SK-N-SH (cell line): ENCODE measurements at regions of chr14 and their contacts with region 1.

Region 1: DNA sequence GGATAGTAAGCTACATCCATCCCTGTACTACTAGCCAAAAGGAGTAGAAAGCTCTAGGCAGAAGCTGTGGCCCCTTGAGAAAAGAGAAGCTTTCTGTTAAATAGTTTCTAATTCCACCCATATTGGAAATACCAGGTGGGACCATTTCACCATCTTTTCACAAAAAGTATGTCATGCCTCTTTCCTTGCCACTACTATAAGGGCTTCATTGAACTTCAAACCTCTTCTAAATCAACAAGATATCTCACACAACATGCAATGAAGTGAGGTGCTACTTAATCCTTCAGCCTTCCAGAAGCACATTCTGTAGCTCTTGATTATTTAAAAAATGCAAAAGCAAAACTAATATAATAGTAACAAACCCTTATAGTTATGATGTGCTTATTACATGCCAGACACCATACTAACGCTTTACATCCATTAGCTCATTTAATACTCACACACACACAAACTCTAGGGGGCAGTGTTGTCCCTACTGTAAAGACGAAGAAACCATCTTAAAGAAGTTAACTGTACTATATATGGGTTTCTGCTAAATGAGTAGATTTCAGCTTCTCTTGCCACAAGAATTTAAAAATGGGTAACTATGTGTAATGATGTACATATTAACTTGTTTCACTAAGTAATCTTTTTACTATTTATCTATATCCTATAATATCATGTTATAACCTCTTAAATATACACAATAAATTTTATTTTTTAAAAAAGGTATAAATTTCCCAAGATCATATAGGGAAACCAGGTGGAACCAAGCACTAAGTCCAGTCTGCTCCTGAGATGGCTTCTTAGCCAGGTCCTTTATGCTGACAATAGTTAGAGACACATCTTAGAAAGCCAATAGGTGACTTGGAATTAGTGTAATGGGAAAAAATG is 124.4 kb downstream of the RPS29 start:
- DNase-seq: peak; percentile 33
- H3K4me3 ChIP-seq: no peak overlapping the region; a peak in 1 of 4 replicates
- H3K27ac ChIP-seq: no peak overlapping the region
- H3K4me1 ChIP-seq: no peaks in the 10 kb centered on the region
- H3K27me3 ChIP-seq: no peaks in the 10 kb centered on the region
- CTCF ChIP-seq: peak; percentile 85
- EP300 ChIP-seq: no peak
- RAD21 ChIP-seq: peak; percentile 82

Region 2: DNA sequence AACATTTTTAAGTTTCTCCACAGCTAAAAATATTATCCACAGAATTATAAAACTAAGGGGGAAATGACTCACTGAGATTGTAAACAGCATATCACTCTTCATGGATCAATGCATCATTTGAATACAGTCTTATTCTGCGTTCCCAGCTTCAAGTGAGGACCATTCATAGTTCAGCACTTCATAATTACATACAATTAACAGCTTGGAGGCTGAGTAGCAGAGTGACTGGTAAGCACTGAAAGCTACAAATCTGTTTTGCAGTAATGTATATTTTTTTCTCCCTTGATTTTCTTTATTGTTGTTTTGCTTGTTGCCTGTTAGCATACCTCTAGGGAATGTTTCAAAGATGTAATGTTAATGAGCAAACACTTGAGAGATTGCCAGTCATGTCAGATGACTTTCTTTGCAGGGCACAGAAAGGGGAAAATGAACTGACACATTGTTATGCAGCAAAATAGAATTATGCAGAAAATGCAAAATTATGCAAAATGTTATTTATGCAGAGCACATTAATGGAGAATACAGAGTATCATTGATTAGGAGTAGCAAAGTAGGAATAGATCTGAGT is 14.1 kb before region 1 on chr14:
- CTCF ChIA-PET with region 1: interaction called, 80 read pairs
- POLR2A ChIA-PET with region 1: no interaction called
- DNase-seq: no peak
- H3K4me3 ChIP-seq: no peak overlapping the region
- H3K27ac ChIP-seq: no peak overlapping the region
- H3K4me1 ChIP-seq: peaks cover 0 to 4% of the 10 kb centered on the region in 2 experiments; a peak in 1 of 4 replicates
- H3K27me3 ChIP-seq: no peaks in the 10 kb centered on the region
- CTCF ChIP-seq: no peak
- EP300 ChIP-seq: no peak
- RAD21 ChIP-seq: no peak

Region 3: GRCh38 chr14:49505041-49505766 is 43.4 kb after region 1 on chr14:
- CTCF ChIA-PET with region 1: interaction called, 26 read pairs
- POLR2A ChIA-PET with region 1: no interaction called
- DNase-seq: no peak
- H3K4me3 ChIP-seq: no peak overlapping the region
- H3K27ac ChIP-seq: no peak overlapping the region
- H3K4me1 ChIP-seq: no peaks in the 10 kb centered on the region
- H3K27me3 ChIP-seq: peaks cover 7% of the 10 kb centered on the region; the same call in 1 of the 2 replicates
- CTCF ChIP-seq: no peak
- EP300 ChIP-seq: no peak
- RAD21 ChIP-seq: no peak

Region 4: DNA sequence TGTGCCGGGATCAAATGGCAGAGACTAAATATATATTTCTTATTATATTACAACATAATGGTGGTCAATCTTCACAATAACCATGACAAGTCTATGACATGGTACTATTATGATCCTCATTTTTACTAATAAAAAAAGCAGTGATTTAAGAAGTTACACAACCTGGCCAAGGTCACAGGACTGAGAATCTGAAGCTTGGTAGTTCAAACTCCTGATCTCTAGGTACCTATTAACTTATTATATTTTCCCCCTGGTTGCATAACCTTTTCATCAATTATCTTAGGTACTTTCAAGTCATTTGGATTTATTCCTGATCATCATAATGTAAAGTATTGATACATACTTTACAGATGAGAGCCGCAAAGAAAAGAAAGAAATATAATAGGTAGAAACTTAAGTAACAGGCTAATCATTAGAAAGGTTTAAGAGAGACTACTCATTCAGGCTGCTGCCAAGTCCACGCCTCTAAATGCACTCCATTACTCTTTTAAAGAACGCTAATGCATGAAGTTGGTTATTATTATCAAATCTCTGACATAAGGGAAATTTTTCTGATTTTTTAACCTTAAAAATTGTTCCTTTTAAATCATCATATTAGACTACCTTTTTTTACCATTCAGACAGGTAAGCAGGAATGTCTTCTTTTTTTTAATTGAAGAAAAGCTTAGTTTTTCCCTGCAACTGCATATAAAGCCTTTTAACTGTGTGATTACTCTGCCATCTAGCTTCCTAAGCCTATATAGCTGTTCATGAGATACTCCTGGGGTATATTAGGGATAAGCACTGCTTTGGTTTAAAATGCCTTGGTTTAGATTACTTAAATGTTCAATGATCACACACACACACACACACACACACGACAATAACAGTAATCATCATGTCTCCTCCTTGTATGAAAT is 88.8 kb after region 1 on chr14:
- CTCF ChIA-PET with region 1: interaction called, 27 read pairs
- POLR2A ChIA-PET with region 1: no interaction called
- DNase-seq: peak; percentile 26
- H3K4me3 ChIP-seq: no peak overlapping the region
- H3K27ac ChIP-seq: no peak overlapping the region
- H3K4me1 ChIP-seq: peaks cover 0 to 4% of the 10 kb centered on the region in 2 experiments; a peak in 1 of 4 replicates
- H3K27me3 ChIP-seq: no peaks in the 10 kb centered on the region
- CTCF ChIP-seq: peak; percentile 45
- EP300 ChIP-seq: no peak
- RAD21 ChIP-seq: peak; percentile 58

Region 5: DNA sequence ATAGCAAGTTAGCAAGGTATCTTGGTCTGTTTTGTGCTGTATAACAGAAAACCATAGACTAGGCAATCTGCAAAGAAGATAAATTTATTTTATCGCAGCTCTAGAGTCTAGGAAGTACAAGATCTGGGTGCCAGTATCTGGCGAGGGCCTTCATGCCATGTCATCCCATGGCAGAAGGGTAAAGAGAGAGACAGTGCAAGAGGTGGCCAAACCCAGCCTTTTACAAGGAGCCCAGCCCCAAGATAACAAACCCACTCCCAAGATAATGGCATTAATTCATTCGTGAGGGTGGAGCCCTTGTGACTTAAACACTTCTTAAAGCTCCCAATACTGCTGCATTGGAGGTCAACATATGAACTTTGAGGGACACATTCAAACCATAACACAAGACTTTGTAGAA is 107.5 kb after region 1 on chr14:
- CTCF ChIA-PET with region 1: no interaction called
- POLR2A ChIA-PET with region 1: no interaction called
- DNase-seq: no peak
- H3K4me3 ChIP-seq: no peak overlapping the region
- H3K27ac ChIP-seq: no peak overlapping the region
- H3K4me1 ChIP-seq: no peaks in the 10 kb centered on the region
- H3K27me3 ChIP-seq: no peaks in the 10 kb centered on the region
- CTCF ChIP-seq: no peak
- EP300 ChIP-seq: no peak
- RAD21 ChIP-seq: no peak